MCF 10A (cell line): ENCODE measurements at regions of chr3 and their contacts with region 1.

Region 1: GRCh38 chr3:171829841-171830517 is 13.2 kb upstream of the TMEM212 start:
- DNase-seq: peak; percentile 88
- H3K4me3 Mint-ChIP-seq: no peak overlapping the region
- H3K27ac Mint-ChIP-seq: no peak overlapping the region
- H3K4me1 Mint-ChIP-seq: peaks cover 28% of the 10 kb centered on the region
- H3K27me3 Mint-ChIP-seq: no peaks in the 10 kb centered on the region
- CTCF ChIP-seq: peak; percentile 85

Region 2: DNA sequence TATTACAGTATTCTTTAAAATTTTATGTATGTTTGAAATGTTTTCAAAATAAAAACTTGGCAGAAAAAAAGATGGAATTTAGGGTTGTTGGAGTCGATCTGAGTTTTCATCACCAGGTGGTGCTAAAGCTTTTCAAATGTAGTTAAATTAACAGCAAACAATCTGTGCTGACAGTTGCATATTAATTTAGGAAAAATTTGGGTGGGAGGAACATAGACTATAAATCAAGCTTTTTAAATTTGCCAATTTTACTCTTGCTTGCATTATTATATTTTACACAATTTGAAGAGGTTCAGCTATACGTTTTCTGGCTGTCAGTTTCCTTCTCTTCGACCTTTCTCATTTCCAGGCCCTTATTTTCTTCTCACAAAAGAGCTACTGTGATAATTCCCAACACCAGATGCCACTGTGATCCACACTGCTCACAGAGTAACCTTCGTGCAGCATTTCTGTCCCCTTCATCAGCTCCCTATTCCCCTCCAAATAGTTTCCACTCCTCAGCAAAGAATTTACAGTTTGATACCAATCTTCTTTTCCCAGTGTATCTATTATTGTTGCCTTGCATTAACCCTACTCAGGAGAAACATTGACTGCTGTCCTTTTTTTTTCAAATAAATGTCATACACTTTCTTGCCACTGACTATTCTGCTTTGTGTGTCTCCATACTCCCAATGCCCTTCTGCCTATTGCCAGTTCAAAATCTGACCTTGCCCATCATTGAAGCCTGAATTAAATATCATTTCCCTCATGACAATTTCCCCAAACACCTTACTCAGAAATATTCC is 868.2 kb before region 1 on chr3:
- CTCF ChIA-PET with region 1: interaction called, 12 read pairs
- POLR2A ChIA-PET with region 1: no interaction called
- intact Hi-C with region 1: loop called (anchors 1 kb)
- DNase-seq: peak; percentile 45
- H3K4me3 Mint-ChIP-seq: no peak overlapping the region
- H3K27ac Mint-ChIP-seq: no peak overlapping the region
- H3K4me1 Mint-ChIP-seq: no peaks in the 10 kb centered on the region
- H3K27me3 Mint-ChIP-seq: no peaks in the 10 kb centered on the region
- CTCF ChIP-seq: peak; percentile 76

Region 3: DNA sequence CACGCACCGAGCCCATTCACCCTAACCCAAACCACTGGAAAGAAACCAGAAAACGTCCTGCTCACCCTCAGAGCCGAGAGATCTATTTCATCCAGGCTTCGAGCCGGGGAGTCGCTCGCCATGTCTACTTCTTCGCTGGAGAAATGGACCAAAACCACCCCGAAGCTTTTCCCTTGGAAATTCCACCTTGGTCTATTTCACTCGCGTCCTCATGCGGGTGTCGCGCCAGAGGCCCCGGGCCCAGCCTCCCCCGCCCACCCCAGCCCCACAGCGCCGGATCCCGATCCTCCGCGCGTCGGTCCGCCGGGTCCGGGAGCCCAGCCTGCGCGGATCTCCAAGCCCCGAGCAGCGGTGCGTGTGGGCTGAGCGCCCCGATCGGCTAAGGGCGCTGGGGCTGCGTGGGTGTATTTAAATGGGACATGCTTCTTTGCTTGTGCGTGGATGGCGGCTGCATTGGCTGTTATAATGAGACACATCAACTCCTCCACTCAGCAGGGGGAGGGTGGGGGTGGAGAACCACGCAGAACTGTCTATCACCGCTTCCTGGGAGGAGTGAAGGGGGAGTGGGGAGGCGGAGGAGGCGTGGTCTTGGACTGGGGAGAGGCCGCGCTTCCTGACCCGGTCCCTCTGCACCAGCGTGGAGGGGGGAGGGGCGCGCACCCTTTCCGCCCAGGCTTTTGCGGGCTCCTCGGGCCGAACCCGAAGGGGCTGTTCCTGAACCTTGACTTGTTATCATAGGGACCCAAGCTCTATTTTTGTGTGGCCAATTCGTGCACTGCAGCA is 369.8 kb before region 1 on chr3 and contains the start of gene TNIK:
- CTCF ChIA-PET with region 1: no interaction called
- POLR2A ChIA-PET with region 1: interaction called, 3 read pairs
- intact Hi-C with region 1: loop called (anchors 10 kb)
- DNase-seq: peak; percentile 88
- H3K4me3 Mint-ChIP-seq: peak within 1 kb of the TSS; percentile 90
- H3K27ac Mint-ChIP-seq: peak within 1 kb of the TSS; percentile 86
- H3K4me1 Mint-ChIP-seq: peaks cover 20% of the 10 kb centered on the region
- H3K27me3 Mint-ChIP-seq: no peaks in the 10 kb centered on the region
- CTCF ChIP-seq: peak; percentile 37
- total RNA-seq, gene TNIK: 3.4 and 4.3 TPM in 2 replicates

Region 4: DNA sequence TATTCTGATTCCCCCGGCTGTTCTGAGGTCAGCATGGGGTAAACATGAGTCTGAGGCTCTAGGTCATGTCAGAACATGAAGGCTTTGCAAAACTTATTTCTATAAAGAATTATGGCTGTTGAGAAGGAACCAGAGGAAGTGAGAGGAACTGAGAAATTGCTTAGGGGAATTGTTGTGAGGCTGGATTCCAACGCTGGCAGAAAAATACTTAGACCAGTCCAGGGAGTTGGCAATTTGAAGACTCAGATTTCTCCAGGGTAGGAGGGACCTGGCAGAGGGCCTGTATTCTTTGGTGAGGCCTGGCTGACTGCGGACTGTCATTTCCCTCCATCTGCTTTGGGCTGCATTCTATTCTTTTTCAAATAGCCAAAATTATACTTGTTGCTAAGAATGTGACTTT is 175.2 kb before region 1 on chr3:
- CTCF ChIA-PET with region 1: interaction called, 43 read pairs
- POLR2A ChIA-PET with region 1: interaction called, 3 read pairs
- intact Hi-C with region 1: no loop called
- DNase-seq: peak; percentile 78
- H3K4me3 Mint-ChIP-seq: no peak overlapping the region
- H3K27ac Mint-ChIP-seq: peak overlapping the region; percentile 88
- H3K4me1 Mint-ChIP-seq: peaks cover 8% of the 10 kb centered on the region
- H3K27me3 Mint-ChIP-seq: no peaks in the 10 kb centered on the region
- CTCF ChIP-seq: no peak

Region 5: GRCh38 chr3:171788546-171789351 is 41.2 kb before region 1 on chr3:
- CTCF ChIA-PET with region 1: interaction called, 17 read pairs
- POLR2A ChIA-PET with region 1: interaction called, 5 read pairs
- intact Hi-C with region 1: no loop called
- DNase-seq: peak; percentile 88
- H3K4me3 Mint-ChIP-seq: no peak overlapping the region
- H3K27ac Mint-ChIP-seq: peak overlapping the region; percentile 61
- H3K4me1 Mint-ChIP-seq: peaks cover 27% of the 10 kb centered on the region
- H3K27me3 Mint-ChIP-seq: no peaks in the 10 kb centered on the region
- CTCF ChIP-seq: no peak

Region 6: DNA sequence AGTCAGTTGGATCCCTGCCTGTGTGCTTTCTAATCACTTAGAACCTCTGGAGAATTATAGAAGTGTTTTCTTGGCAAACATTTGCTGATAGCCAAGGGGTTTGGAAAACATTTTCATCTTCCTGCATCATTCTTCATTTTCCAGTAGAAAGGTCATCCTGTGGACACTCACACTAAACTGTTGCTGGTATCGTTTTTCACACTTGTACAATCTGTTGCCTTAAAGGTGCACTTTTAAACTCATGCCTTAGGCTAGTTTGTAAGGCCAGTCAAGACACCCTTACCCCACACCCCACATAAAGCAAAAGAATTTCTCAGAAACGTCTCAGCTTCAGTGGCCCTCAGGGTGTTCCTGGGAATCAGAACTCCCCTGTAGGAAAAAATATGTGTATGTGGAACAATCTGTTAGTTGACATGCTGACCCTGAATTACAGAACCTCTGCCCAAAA is 13.9 kb before region 1 on chr3:
- CTCF ChIA-PET with region 1: interaction called, 40 read pairs
- POLR2A ChIA-PET with region 1: interaction called, 67 read pairs
- intact Hi-C with region 1: no loop called
- DNase-seq: no peak
- H3K4me3 Mint-ChIP-seq: no peak overlapping the region
- H3K27ac Mint-ChIP-seq: no peak overlapping the region
- H3K4me1 Mint-ChIP-seq: peaks cover 18% of the 10 kb centered on the region
- H3K27me3 Mint-ChIP-seq: no peaks in the 10 kb centered on the region
- CTCF ChIP-seq: no peak